ENCODE measurements at regions of chr12 and their contacts with region 1.

Region 1: DNA sequence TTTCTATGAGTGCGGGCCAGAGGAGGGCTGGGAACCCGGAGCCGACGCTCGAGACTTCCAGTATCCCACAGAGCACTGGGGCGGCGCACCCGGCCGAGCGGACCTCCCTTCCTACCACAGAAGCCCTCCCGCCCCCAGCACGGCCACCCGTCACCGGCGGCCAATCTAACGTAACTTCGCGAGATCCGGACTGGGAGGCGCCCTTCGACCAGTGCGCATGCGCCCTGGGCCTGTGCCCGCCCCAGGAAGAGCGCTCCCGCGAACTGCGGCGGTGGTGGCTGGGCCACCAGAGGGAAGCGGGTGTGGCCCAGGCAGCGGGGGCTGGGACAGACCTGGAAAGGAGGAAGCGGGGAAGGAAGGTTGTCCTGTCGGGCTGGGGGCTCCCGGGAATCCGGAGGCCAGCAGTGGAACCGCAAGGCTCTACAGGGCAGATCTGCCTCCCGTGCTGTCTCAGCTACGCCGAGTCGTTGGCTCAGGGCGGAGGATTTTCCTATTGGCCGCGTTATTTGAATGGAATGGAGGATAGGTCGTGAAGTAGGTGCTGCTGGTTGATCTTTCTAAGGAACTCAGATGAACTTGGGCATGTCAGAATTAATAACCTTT is at the start of gene PPP1R12A:
- DNase-seq: peak; percentile 98
- H3K4me3 Mint-ChIP-seq: peak within 1 kb of the TSS; percentile 89
- H3K27ac Mint-ChIP-seq: peak within 1 kb of the TSS; percentile 94
- H3K4me1 Mint-ChIP-seq: peaks cover 31% of the 10 kb centered on the region
- H3K27me3 Mint-ChIP-seq: no peaks in the 10 kb centered on the region
- total RNA-seq, gene PPP1R12A: 78.9 and 84.8 TPM in 2 replicates

Region 2: GRCh38 chr12:79690638-79691493 is 244.3 kb before region 1 on chr12 and contains the start of gene PAWR:
- intact Hi-C with region 1: loop called (anchors 10 kb)
- DNase-seq: peak; percentile 73
- H3K4me3 Mint-ChIP-seq: peak within 1 kb of the TSS; percentile 86
- H3K27ac Mint-ChIP-seq: peak within 1 kb of the TSS; percentile 32
- H3K4me1 Mint-ChIP-seq: peaks cover 8% of the 10 kb centered on the region
- H3K27me3 Mint-ChIP-seq: peaks cover 55% of the 10 kb centered on the region
- total RNA-seq, gene PAWR: 7.1 and 7.5 TPM in 2 replicates

Region 3: GRCh38 chr12:79834712-79835376 is 100.3 kb before region 1 on chr12:
- intact Hi-C with region 1: loop called (anchors 5 kb)
- DNase-seq: no peak
- H3K4me3 Mint-ChIP-seq: no peak overlapping the region
- H3K27ac Mint-ChIP-seq: no peak overlapping the region
- H3K4me1 Mint-ChIP-seq: peaks cover 17% of the 10 kb centered on the region
- H3K27me3 Mint-ChIP-seq: no peaks in the 10 kb centered on the region

Region 4: GRCh38 chr12:79886917-79887519 is 48.1 kb before region 1 on chr12:
- intact Hi-C with region 1: loop called (anchors 1 kb)
- DNase-seq: no peak
- H3K4me3 Mint-ChIP-seq: no peak overlapping the region
- H3K27ac Mint-ChIP-seq: no peak overlapping the region
- H3K4me1 Mint-ChIP-seq: peaks cover 21% of the 10 kb centered on the region
- H3K27me3 Mint-ChIP-seq: no peaks in the 10 kb centered on the region

Region 5: DNA sequence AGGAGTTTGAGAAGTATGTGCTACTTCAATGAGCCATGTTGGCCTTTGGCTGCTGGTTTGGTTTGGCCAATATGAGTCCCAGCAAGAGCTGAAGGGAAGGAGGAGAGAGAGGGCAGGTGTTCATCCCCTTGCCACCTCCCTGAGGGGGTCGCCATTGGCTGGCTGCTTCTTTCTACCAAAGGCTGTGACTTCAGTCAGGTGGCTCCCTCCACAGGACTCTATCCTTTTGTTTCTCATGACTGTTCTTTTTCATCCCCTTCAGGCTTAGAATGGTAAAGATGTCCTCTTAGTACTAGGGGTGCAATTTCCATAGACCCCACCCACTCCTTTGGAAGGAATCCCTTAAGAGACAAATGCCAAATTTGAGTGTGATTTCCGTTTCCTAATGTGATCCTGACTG is 133.1 kb after region 1 on chr12:
- intact Hi-C with region 1: no loop called
- DNase-seq: no peak
- H3K4me3 Mint-ChIP-seq: no peak overlapping the region
- H3K27ac Mint-ChIP-seq: no peak overlapping the region
- H3K4me1 Mint-ChIP-seq: no peaks in the 10 kb centered on the region
- H3K27me3 Mint-ChIP-seq: peaks cover 2% of the 10 kb centered on the region

Measured in activated CD4-positive, alpha-beta T cell treated with anti-CD3 and anti-CD28 coated beads, Interleukin-2, amount 10 ng/mL, durations not matched to agents 24 days and 14 days (primary cell).